Transverse colon (tissue), 4 donors: ENCODE measurements at regions of chr2 and their contacts with region 1.

Region 1: DNA sequence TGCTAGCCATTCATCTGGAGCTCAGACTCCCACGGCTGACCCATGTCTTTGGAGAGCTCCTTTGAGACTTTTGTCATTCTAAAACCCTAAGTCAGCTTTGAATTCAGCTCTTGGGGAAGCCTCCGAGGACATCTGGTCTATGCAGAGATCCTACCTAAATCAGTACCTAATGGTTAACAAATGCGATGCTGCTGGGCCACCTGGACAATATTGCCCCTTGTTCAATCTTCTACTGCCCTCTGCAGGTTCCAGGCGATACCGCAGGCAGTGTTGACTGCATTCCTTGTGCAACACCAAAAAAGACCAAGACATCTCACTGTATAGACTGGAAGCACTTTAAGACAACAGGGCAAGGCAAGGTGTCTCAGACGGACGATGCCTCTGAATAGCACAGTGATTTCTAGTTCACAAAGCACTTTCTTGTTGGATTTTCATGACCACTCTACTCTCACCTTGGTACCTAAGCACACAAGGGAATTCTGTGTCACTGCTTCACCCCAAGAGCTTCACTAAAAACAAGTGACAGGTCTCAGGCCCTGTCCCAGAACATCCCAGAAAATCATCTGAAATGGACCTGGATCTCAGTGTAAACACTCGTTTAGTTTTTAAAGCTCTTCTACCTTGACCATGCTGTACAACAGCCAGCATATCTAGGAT is 80.9 kb downstream of the XDH start:
- DNase-seq: peak; percentile 83
- H3K4me3 ChIP-seq: no peak overlapping the region
- H3K27ac ChIP-seq: no peak overlapping the region
- H3K4me1 ChIP-seq: no peaks in the 10 kb centered on the region
- H3K27me3 ChIP-seq: no peaks in the 10 kb centered on the region
- CTCF ChIP-seq: peak; percentile 83 to 90 (median 84)
- EP300 ChIP-seq: no peak
- POLR2A ChIP-seq: no peak

Region 2: GRCh38 chr2:30178618-30179434 is 1154.8 kb before region 1 on chr2:
- in situ Hi-C with region 1: loop called in 1 of 4 experiments (anchors 25 kb)
- intact Hi-C with region 1: no loop called
- DNase-seq: peak; percentile 22
- H3K4me3 ChIP-seq: no peak overlapping the region
- H3K27ac ChIP-seq: peak overlapping the region; percentile 48 to 65 (median 52)
- H3K4me1 ChIP-seq: peaks cover 0 to 5% (median 0%) of the 10 kb centered on the region in 4 donors
- H3K27me3 ChIP-seq: no peaks in the 10 kb centered on the region
- CTCF ChIP-seq: no peak
- EP300 ChIP-seq: peak; percentile 68
- POLR2A ChIP-seq: no peak

Region 3: GRCh38 chr2:30721668-30722647 is 611.7 kb before region 1 on chr2:
- in situ Hi-C with region 1: loop called in 3 of 4 experiments (anchors 5 to 25 kb)
- intact Hi-C with region 1: no loop called
- DNase-seq: no peak
- H3K4me3 ChIP-seq: no peak overlapping the region
- H3K27ac ChIP-seq: no peak overlapping the region
- H3K4me1 ChIP-seq: no peaks in the 10 kb centered on the region
- H3K27me3 ChIP-seq: peaks cover 9% of the 10 kb centered on the region
- CTCF ChIP-seq: no peak
- EP300 ChIP-seq: no peak
- POLR2A ChIP-seq: no peak

Region 4: GRCh38 chr2:30862054-30862651 is 471.5 kb before region 1 on chr2:
- in situ Hi-C with region 1: loop called in 1 of 4 experiments (anchors 10 kb)
- intact Hi-C with region 1: no loop called
- DNase-seq: peak; percentile 49
- H3K4me3 ChIP-seq: no peak overlapping the region
- H3K27ac ChIP-seq: no peak overlapping the region
- H3K4me1 ChIP-seq: no peaks in the 10 kb centered on the region
- H3K27me3 ChIP-seq: no peaks in the 10 kb centered on the region
- CTCF ChIP-seq: peak; percentile 46 to 65 (median 60)
- EP300 ChIP-seq: no peak
- POLR2A ChIP-seq: no peak

Region 5: GRCh38 chr2:31233741-31234682 is 99.6 kb before region 1 on chr2 and contains the start of gene EHD3:
- in situ Hi-C with region 1: loop called in 1 of 4 experiments (anchors 10 kb)
- intact Hi-C with region 1: loop called (anchors 10 kb)
- DNase-seq: peak; percentile 84
- H3K4me3 ChIP-seq: peak within 1 kb of the TSS; percentile 48 to 58 (median 52)
- H3K27ac ChIP-seq: peak within 1 kb of the TSS; percentile 25 to 70 (median 64)
- H3K4me1 ChIP-seq: peaks cover 0 to 21% (median 6%) of the 10 kb centered on the region in 4 donors
- H3K27me3 ChIP-seq: peaks cover 4% of the 10 kb centered on the region
- CTCF ChIP-seq: peak in 4 of 5 experiments; percentile 33 to 51 (median 36)
- EP300 ChIP-seq: no peak
- POLR2A ChIP-seq: peak; percentile 15
- total RNA-seq, gene EHD3: 1.2 to 10.1 (median 3.6) TPM

Region 6: DNA sequence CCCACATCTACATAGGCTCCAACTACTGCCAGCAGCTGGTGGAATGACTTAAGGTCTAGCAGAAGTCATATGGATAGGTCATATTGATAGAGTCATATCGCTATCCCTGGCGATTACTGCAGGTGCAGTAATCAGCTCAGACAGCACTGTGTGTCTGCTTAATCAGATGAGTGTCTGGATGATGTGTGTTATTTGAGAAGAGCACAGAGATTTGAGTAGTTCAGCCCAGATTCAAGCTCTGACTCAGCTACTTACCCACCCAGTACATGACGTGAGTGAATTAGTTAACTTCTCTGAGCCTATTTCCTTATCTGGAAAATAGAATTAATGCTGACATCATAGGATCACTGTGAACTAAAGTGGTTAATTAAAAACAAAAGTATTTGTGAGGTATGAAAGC is 20.8 kb before region 1 on chr2:
- in situ Hi-C with region 1: no loop called
- intact Hi-C with region 1: no loop called
- DNase-seq: no peak
- H3K4me3 ChIP-seq: no peak overlapping the region
- H3K27ac ChIP-seq: no peak overlapping the region
- H3K4me1 ChIP-seq: no peaks in the 10 kb centered on the region
- H3K27me3 ChIP-seq: no peaks in the 10 kb centered on the region
- CTCF ChIP-seq: no peak
- EP300 ChIP-seq: no peak
- POLR2A ChIP-seq: no peak